Dorsolateral prefrontal cortex (tissue), 120 donors: ENCODE measurements at regions of chr3 and their contacts with region 1.

Region 1: GRCh38 chr3:134308350-134308891 is 57.8 kb upstream of the RYK start:
- DNase-seq: peak; percentile 75 to 91 (median 84)
- H3K4me3 ChIP-seq: peak overlapping the region in 51 of 59 donors; percentile 8 to 63 (median 38)
- H3K27ac ChIP-seq: peak overlapping the region; percentile 7 to 94 (median 86)
- H3K27me3 ChIP-seq: no peaks in the 10 kb centered on the region
- CTCF ChIP-seq: peak; percentile 98 to 100 (median 100)

Region 2: GRCh38 chr3:134197681-134198261 is 110.7 kb before region 1 on chr3:
- intact Hi-C with region 1: loop called in 1 of 2 experiments (anchors 5 kb)
- DNase-seq: no peak
- H3K4me3 ChIP-seq: no peak overlapping the region
- H3K27ac ChIP-seq: no peak overlapping the region
- H3K27me3 ChIP-seq: no peaks in the 10 kb centered on the region
- CTCF ChIP-seq: peak; percentile 52 to 89 (median 74)

Region 3: GRCh38 chr3:134250717-134251220 is 57.7 kb before region 1 on chr3 and contains the start of gene RYK:
- intact Hi-C with region 1: loop called in 1 of 2 experiments (anchors 5 kb)
- DNase-seq: peak; percentile 62 to 87 (median 73)
- H3K4me3 ChIP-seq: peak within 1 kb of the TSS; percentile 44 to 97 (median 85)
- H3K27ac ChIP-seq: peak within 1 kb of the TSS; percentile 62 to 98 (median 90)
- H3K27me3 ChIP-seq: no peaks in the 10 kb centered on the region
- CTCF ChIP-seq: peak in 10 of 56 donors; percentile 13 to 39 (median 18)
- total RNA-seq, gene RYK: 28.9 to 62.9 (median 42.7) TPM

Region 4: GRCh38 chr3:134373994-134374790 is 65.8 kb after region 1 on chr3 and contains the start of gene AMOTL2:
- intact Hi-C with region 1: loop called (anchors 1 kb)
- DNase-seq: peak; percentile 55 to 88 (median 74)
- H3K4me3 ChIP-seq: peak within 1 kb of the TSS; percentile 53 to 96 (median 85)
- H3K27ac ChIP-seq: peak within 1 kb of the TSS; percentile 92 to 100 (median 100)
- H3K27me3 ChIP-seq: no peaks in the 10 kb centered on the region
- CTCF ChIP-seq: peak in 11 of 56 donors; percentile 7 to 46 (median 16)
- total RNA-seq, gene AMOTL2: 43.1 to 220 (median 75.3) TPM

Region 5: GRCh38 chr3:134473868-134474546 is 165.6 kb after region 1 on chr3:
- intact Hi-C with region 1: loop called (anchors 2 to 5 kb)
- DNase-seq: peak in 6 of 10 donors; percentile 49 to 90 (median 76)
- H3K4me3 ChIP-seq: peak overlapping the region in 3 of 59 donors; percentile 6 to 35 (median 8)
- H3K27ac ChIP-seq: peak overlapping the region in 3 of 59 donors; percentile 1 to 16 (median 13)
- H3K27me3 ChIP-seq: no peaks in the 10 kb centered on the region
- CTCF ChIP-seq: peak; percentile 78 to 98 (median 90)

Region 6: GRCh38 chr3:134607054-134608022 is 298.9 kb after region 1 on chr3:
- intact Hi-C with region 1: no loop called
- DNase-seq: no peak
- H3K4me3 ChIP-seq: no peak overlapping the region
- H3K27ac ChIP-seq: no peak overlapping the region
- H3K27me3 ChIP-seq: no peaks in the 10 kb centered on the region
- CTCF ChIP-seq: no peak

Region 7: GRCh38 chr3:134677196-134677986 is 369.0 kb after region 1 on chr3:
- intact Hi-C with region 1: no loop called
- DNase-seq: peak in 3 of 10 donors; percentile 30 to 65 (median 48)
- H3K4me3 ChIP-seq: no peak overlapping the region
- H3K27ac ChIP-seq: no peak overlapping the region
- H3K27me3 ChIP-seq: no peaks in the 10 kb centered on the region
- CTCF ChIP-seq: peak in 28 of 56 donors; percentile 7 to 33 (median 21)